Heart right ventricle (tissue), 16 donors: ENCODE measurements at regions of chr1 and their contacts with region 1.

Region 1: DNA sequence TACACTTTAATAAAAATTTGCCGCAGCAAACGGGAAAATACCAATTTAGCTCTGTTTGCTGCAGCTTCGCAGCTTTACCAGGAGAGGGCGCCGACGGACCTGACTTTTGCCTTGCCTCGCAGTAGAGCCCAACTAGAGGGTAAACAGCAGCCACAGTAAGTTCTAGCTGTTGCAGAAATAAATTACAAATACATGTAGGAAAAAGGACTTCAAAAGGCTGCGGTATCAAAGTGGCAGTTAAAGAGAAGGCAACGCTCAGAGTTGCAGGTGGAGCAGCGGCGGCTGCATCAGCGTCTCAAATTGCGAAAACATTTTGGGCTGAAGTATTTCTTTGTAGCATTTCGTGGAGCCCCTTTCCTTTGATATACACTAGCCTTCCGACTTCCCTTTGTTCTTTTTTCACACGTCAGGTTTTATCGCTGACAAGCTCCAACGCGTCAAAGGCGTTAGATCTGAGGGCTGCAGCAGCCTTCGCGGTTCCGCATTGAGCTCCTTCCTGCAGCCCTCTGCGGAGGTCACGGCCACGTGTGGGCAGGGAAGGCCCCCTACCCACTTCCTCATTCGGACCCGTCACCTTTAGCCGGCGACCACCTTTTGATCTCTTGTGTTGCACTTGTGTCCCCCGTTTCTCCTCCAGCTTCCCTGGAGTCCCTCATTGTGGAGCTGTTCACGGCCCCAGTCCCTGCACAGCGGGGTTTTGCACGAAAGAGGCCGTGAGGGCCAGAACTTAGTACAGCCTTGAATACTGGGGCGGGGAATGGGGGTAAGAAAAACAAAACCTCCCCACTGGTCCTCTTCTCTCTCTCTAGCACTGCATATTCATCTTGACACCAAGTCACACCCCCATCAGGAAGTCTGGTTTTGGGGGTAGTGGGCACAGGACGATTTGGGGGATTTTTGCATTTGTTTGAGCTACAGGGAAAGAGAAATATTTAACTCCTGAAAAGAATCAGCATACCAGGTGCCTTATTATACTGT is 72.8 kb downstream of the S1PR1 start:
- DNase-seq: peak; percentile 32 to 38
- ATAC-seq: peak; percentile 55 to 86 (median 74)
- H3K4me3 ChIP-seq: peak overlapping the region in 9 of 10 donors; percentile 6 to 58 (median 50)
- H3K27ac ChIP-seq: peak overlapping the region in 1 of 10 donors; percentile 82
- H3K4me1 ChIP-seq: peaks cover 0 to 36% (median 10%) of the 10 kb centered on the region in 9 donors
- H3K27me3 ChIP-seq: peaks cover 0 to 6% (median 0%) of the 10 kb centered on the region in 7 donors
- CTCF ChIP-seq: peak; percentile 70 to 88 (median 81)

Region 2: GRCh38 chr1:101221945-101222429 is 87.6 kb before region 1 on chr1:
- intact Hi-C with region 1: no loop called
- DNase-seq: no peak
- ATAC-seq: no peak
- H3K4me3 ChIP-seq: no peak overlapping the region
- H3K27ac ChIP-seq: no peak overlapping the region
- H3K4me1 ChIP-seq: peaks cover 0 to 12% (median 4%) of the 10 kb centered on the region in 9 donors
- H3K27me3 ChIP-seq: no peaks in the 10 kb centered on the region
- CTCF ChIP-seq: no peak

Region 3: GRCh38 chr1:101357444-101357986 is 47.9 kb after region 1 on chr1:
- intact Hi-C with region 1: loop called in 9 of 10 experiments (anchors 1 to 5 kb)
- DNase-seq: peak in 1 of 2 donors; percentile 77
- ATAC-seq: peak; percentile 78 to 90 (median 82)
- H3K4me3 ChIP-seq: no peak overlapping the region
- H3K27ac ChIP-seq: no peak overlapping the region
- H3K4me1 ChIP-seq: no peaks in the 10 kb centered on the region
- H3K27me3 ChIP-seq: peaks cover 0 to 26% (median 0%) of the 10 kb centered on the region in 7 donors
- CTCF ChIP-seq: peak; percentile 76 to 91 (median 85)

Region 4: DNA sequence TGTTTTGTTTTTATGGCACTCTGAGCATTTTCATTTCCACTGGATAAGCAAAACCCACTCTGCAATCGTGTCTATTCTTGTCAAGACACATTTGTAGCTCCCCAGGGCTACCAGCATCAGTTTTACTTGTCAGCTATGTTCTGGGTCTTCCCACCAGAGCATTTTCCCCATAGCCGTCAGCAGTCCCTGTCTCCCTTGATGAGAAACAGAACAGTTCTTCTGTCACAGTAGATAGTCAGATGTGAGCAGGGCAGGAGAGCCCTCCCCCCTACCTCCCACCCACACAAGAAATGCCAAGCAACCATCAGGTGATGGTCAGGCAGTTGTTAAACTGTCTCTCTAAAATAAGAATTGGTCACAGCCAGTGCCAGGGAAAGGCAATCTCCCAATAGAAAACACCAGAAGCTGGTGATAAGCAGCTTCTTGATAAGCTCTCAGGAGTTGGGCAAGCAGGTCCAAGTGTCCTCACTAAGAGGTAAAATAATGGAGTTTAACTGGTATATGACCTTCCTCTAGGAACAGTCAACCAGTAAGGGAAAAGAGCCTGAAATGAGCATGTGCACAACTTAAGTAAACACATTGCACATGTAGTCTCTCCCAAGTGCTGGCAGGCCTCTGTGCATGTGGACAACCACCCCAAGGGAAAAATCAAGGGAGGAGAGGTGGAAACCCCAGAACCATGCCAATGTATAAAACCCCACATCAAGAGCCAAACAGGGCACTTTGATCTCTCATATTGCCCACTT is 135.4 kb after region 1 on chr1:
- intact Hi-C with region 1: loop called in 1 of 10 experiments (anchors 10 kb)
- DNase-seq: peak in 1 of 2 donors; percentile 6
- ATAC-seq: peak in 7 of 8 donors; percentile 61 to 90 (median 74)
- H3K4me3 ChIP-seq: no peak overlapping the region
- H3K27ac ChIP-seq: peak overlapping the region in 1 of 10 donors; percentile 19
- H3K4me1 ChIP-seq: peaks cover 0 to 10% (median 0%) of the 10 kb centered on the region in 9 donors
- H3K27me3 ChIP-seq: no peaks in the 10 kb centered on the region
- CTCF ChIP-seq: no peak

Region 5: DNA sequence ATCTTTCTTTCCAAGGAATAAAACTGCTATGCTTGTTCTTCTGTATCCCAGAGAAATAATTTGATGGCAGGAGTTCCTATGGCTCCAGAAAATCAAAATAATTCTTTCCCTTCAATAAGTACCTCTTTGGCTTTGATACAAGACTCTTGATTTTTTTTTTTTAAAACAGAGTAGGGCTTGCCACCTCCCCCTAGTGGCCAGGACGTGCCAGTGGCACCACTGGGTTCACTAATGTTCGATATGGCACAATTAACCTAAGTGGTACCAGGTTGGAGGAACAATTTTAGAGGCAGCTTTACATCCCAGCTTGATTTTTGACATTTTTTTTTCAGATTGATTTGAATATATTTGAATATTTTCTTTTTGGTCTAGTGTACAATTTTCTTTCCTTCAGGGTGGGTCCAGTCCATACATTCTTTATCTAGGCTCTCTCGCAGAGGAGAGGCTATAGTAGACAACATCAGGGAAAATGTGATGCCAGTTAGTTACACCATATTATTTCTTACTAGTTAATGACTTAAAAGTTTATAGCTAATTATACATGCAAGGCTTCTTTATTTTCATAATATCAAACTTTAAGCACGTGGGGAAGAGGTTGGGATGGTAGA is 258.1 kb after region 1 on chr1:
- intact Hi-C with region 1: loop called in 1 of 10 experiments (anchors 10 kb)
- DNase-seq: peak in 1 of 2 donors; percentile 19
- ATAC-seq: peak in 1 of 8 donors; percentile 39
- H3K4me3 ChIP-seq: no peak overlapping the region
- H3K27ac ChIP-seq: no peak overlapping the region
- H3K4me1 ChIP-seq: no peaks in the 10 kb centered on the region
- H3K27me3 ChIP-seq: no peaks in the 10 kb centered on the region
- CTCF ChIP-seq: peak; percentile 51 to 89 (median 83)

Region 6: GRCh38 chr1:102174259-102174863 is 864.7 kb after region 1 on chr1:
- intact Hi-C with region 1: no loop called
- DNase-seq: no peak
- ATAC-seq: no peak
- H3K4me3 ChIP-seq: no peak overlapping the region
- H3K27ac ChIP-seq: no peak overlapping the region
- H3K4me1 ChIP-seq: no peaks in the 10 kb centered on the region
- H3K27me3 ChIP-seq: no peaks in the 10 kb centered on the region
- CTCF ChIP-seq: peak in 2 of 9 donors; percentile 11 to 16

Region 7: DNA sequence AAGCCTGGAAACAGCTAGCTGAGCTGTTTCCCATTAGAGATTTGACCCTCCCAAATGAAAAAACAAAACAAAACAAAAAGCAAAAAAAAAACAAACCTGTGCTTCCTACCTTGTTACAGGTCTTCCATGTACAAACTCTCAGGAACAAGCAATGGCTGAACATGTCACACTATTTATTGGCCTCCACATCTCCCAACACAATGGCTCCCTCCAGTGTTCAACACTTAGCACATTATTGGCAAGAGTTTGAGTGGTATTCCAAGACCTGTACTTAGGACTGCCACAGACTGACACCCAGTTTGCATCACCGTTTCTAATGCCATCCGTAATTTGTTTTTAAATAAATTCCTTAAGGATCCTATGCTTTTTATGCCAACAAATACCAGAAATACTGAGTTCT is 882.1 kb after region 1 on chr1:
- intact Hi-C with region 1: loop called in 1 of 10 experiments (anchors 5 kb)
- DNase-seq: peak in 1 of 2 donors; percentile 13
- ATAC-seq: peak in 6 of 8 donors; percentile 38 to 81 (median 72)
- H3K4me3 ChIP-seq: no peak overlapping the region
- H3K27ac ChIP-seq: no peak overlapping the region
- H3K4me1 ChIP-seq: no peaks in the 10 kb centered on the region
- H3K27me3 ChIP-seq: no peaks in the 10 kb centered on the region
- CTCF ChIP-seq: peak in 7 of 9 donors; percentile 32 to 58 (median 44)